ENCODE measurements at regions of chr20 and their contacts with region 1.

Region 1: GRCh38 chr20:50278674-50279531 is 88.3 kb downstream of the CEBPB start:
- DNase-seq: peak; percentile 73
- H3K4me3 ChIP-seq: no peak overlapping the region
- H3K27ac ChIP-seq: no peak overlapping the region
- H3K4me1 ChIP-seq: no peaks in the 10 kb centered on the region
- H3K27me3 ChIP-seq: no peaks in the 10 kb centered on the region
- CTCF ChIP-seq: peak; percentile 43

Region 2: DNA sequence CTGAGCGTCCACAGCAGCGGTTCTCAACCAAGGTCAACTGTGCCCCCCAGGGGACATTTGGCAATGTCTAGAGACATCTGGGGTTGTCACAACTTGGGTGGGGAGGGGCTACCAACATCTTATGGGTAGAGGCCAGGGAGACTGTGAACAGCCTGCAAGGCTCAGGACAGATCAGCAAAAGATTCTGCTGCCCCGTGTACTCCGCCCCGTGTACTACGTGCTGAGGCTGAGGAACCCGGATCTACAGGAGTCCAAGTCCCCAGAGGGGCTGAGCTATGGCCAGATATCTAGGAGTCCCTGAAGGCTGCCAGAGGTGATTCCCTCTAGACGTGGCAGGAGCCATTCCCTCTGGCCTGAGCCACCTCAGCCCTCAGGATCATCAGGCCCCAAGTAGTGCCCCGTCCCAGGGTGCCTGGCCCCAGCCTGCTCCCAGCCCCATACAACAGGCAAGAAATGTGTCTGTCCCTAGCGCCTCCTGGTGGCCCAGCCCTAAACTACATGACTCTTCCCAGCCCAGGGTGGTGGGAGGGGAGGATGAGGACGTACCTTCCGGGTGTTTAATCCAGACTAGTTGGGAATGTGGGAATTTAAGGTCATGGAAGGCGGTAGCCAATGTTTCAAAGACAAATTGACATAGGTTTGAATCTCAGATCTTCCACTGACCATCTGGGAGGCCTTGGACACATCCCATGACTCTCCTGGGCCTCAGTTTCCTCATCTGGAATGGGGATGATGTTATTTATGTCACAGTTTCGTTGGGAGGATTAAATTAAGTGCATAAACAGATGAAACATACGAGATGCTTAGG is 181.8 kb after region 1 on chr20:
- intact Hi-C with region 1: loop called (anchors 10 kb)
- DNase-seq: peak; percentile 95
- H3K4me3 ChIP-seq: no peak overlapping the region
- H3K27ac ChIP-seq: no peak overlapping the region
- H3K4me1 ChIP-seq: peaks cover 5% of the 10 kb centered on the region
- H3K27me3 ChIP-seq: no peaks in the 10 kb centered on the region
- CTCF ChIP-seq: peak; percentile 92